ENCODE measurements at regions of chr17 and their contacts with region 1.

Region 1: DNA sequence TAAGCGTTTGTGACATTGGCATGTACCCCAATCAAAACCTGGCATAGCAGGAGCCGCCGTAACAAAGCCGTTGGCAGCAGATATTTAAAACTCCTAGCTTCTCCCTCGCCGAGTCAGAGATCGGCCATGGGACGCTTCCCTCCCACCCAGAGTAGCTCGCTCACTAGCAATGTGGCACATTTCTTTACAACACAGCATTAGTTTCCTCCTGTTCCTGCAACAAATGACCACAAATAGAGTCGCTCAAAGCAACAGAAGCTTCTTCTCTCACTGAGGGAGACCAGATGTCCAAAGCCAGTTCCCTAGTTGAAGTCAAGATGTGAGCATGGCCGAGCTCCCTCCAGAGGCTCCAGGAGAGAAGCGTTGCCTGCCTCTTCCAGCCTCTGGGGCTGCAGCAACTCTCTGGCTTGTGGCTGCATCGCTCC is 106.7 kb downstream of the RBFOX3 start:
- DNase-seq: no peak
- ATAC-seq: no peak

Region 2: GRCh38 chr17:79220713-79221291 is 283.4 kb before region 1 on chr17:
- intact Hi-C with region 1: no loop called
- DNase-seq: no peak
- ATAC-seq: no peak

Region 3: DNA sequence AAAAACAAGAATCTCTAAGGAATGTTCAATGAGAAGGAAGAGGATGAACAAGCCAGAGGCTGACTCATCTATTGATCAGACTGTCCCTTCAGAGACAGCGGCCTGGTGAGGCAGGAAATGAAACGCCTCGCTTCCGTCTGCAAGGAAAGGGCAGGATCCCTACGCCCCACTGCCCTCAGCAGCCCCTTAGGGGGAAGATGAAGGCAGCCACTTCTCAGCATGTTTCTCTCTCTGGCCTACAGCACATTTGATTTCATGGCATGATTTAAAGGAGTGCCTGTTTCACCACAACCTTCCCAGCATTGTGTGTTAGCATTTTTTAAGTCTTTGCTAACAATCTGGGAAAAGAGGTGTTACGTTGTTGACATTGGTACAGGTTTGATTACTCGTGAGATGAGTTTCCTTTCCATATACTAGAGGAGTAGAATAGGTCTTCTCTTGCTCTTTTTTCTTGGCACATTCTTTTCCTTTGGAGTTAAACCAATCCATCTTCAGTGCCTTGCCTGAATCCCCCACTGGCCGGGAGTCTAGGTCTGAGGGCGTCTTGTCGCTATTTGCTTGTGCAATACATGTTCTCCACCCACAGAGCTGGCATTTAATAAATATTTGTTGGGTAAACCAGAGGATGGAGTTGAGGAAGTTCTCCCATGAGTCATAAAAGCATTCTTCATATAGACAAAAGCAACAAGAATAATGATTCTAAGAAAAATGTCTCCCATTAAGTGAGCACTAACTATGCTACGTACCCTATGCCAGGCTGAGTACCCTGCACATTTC is 59.2 kb after region 1 on chr17:
- intact Hi-C with region 1: loop called (anchors 10 kb)
- DNase-seq: no peak
- ATAC-seq: no peak

Region 4: GRCh38 chr17:79581324-79581932 is 77.2 kb after region 1 on chr17:
- intact Hi-C with region 1: no loop called
- DNase-seq: no peak
- ATAC-seq: no peak

Region 5: GRCh38 chr17:79776378-79777115 is 272.4 kb after region 1 on chr17:
- intact Hi-C with region 1: no loop called
- DNase-seq: no peak
- ATAC-seq: no peak